ENCODE measurements at regions of chr10 and their contacts with region 1.

Region 1: GRCh38 chr10:99430451-99431189 is at the start of gene GOT1:
- DNase-seq: peak; percentile 93
- H3K4me3 Mint-ChIP-seq: peak within 1 kb of the TSS; percentile 99
- H3K27ac Mint-ChIP-seq: peak within 1 kb of the TSS; percentile 94
- H3K4me1 Mint-ChIP-seq: peaks cover 26% of the 10 kb centered on the region
- H3K27me3 Mint-ChIP-seq: peaks cover 3% of the 10 kb centered on the region
- total RNA-seq, gene GOT1: 35.9 and 36.1 TPM in 2 replicates

Region 2: GRCh38 chr10:98446661-98447221 is 983.9 kb before region 1 on chr10 and contains the start of gene HPS1:
- intact Hi-C with region 1: loop called (anchors 5 kb)
- DNase-seq: peak; percentile 78
- H3K4me3 Mint-ChIP-seq: peak within 1 kb of the TSS; percentile 92
- H3K27ac Mint-ChIP-seq: peak within 1 kb of the TSS; percentile 80
- H3K4me1 Mint-ChIP-seq: peaks cover 30% of the 10 kb centered on the region
- H3K27me3 Mint-ChIP-seq: peaks cover 18% of the 10 kb centered on the region
- total RNA-seq, gene HPS1: 56.1 and 63.1 TPM in 2 replicates

Region 3: DNA sequence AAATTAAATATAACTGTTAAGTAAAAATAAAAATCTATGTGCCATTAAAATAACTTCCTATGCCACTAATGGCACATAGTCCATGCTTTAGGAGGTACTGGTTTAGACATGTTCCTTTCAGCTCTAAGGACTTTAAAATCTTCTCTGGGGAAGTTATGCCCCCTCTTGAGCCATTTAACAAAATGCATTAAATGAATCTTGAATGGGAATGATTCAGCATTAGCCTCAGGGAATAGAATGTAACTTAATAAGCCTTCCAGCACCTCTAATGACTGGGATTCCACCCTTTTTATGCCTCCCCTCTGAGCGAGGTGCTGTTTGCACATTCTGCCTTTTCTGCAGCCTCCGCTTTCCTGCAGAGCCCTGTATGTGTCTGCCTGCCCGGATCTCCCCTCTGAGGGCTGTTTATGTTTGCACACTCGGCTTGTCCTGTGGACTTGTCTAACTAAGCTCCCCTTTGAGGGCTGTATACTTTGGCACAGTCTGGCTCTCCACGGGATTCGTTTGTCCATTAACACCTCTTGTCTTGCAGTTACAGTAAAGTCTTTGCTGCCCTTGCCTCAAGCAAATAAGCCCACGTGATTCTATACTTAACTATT is 875.5 kb before region 1 on chr10:
- intact Hi-C with region 1: no loop called
- DNase-seq: no peak
- H3K4me3 Mint-ChIP-seq: no peak overlapping the region
- H3K27ac Mint-ChIP-seq: no peak overlapping the region
- H3K4me1 Mint-ChIP-seq: no peaks in the 10 kb centered on the region
- H3K27me3 Mint-ChIP-seq: no peaks in the 10 kb centered on the region

Region 4: GRCh38 chr10:99395750-99396445 is 34.7 kb before region 1 on chr10:
- intact Hi-C with region 1: loop called (anchors 1 kb)
- DNase-seq: no peak
- H3K4me3 Mint-ChIP-seq: no peak overlapping the region
- H3K27ac Mint-ChIP-seq: peak overlapping the region; percentile 6
- H3K4me1 Mint-ChIP-seq: peaks cover 7% of the 10 kb centered on the region
- H3K27me3 Mint-ChIP-seq: peaks cover 4% of the 10 kb centered on the region

Region 5: DNA sequence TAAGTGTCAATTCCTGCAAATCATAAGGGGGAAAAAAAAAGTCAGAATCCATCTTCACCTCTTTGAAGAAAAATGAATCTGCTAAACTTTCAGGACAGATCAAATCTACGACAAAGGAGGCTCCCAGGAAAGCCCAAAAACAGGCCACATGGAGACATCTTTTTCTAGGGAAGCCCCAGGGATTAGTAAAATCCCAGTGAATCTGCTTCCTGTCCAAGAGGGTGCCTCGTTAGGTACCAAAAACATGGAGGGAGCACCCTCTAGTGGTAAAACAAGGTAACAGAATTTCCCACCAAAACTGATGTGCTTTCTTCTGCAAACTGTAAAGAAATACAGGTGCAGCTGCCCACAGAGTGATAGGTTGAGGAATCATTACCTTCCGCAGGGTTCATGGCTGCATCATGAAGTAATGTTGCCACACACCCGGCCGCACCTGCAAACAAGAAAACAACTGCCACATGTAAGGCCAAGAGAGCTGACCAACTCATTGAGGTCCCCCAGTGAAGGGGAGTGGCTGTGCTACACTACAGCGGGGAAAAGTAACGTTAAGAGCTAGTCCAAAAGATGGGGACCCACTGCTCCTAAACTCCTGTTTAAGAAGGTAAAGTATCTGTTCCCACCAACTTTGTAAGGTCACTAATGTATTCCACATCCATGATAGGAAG is 181.7 kb after region 1 on chr10:
- intact Hi-C with region 1: loop called (anchors 1 kb)
- DNase-seq: no peak
- H3K4me3 Mint-ChIP-seq: no peak overlapping the region
- H3K27ac Mint-ChIP-seq: peak overlapping the region; percentile 41
- H3K4me1 Mint-ChIP-seq: peaks cover 33% of the 10 kb centered on the region
- H3K27me3 Mint-ChIP-seq: no peaks in the 10 kb centered on the region

Region 6: GRCh38 chr10:99659031-99659867 is 228.6 kb after region 1 on chr10 and contains the start of gene ENTPD7:
- intact Hi-C with region 1: loop called (anchors 1 kb)
- DNase-seq: peak; percentile 90
- H3K4me3 Mint-ChIP-seq: peak within 1 kb of the TSS; percentile 96
- H3K27ac Mint-ChIP-seq: peak within 1 kb of the TSS; percentile 91
- H3K4me1 Mint-ChIP-seq: peaks cover 17% of the 10 kb centered on the region
- H3K27me3 Mint-ChIP-seq: peaks cover 19% of the 10 kb centered on the region
- total RNA-seq, gene ENTPD7: 11.0 and 11.1 TPM in 2 replicates

Region 7: DNA sequence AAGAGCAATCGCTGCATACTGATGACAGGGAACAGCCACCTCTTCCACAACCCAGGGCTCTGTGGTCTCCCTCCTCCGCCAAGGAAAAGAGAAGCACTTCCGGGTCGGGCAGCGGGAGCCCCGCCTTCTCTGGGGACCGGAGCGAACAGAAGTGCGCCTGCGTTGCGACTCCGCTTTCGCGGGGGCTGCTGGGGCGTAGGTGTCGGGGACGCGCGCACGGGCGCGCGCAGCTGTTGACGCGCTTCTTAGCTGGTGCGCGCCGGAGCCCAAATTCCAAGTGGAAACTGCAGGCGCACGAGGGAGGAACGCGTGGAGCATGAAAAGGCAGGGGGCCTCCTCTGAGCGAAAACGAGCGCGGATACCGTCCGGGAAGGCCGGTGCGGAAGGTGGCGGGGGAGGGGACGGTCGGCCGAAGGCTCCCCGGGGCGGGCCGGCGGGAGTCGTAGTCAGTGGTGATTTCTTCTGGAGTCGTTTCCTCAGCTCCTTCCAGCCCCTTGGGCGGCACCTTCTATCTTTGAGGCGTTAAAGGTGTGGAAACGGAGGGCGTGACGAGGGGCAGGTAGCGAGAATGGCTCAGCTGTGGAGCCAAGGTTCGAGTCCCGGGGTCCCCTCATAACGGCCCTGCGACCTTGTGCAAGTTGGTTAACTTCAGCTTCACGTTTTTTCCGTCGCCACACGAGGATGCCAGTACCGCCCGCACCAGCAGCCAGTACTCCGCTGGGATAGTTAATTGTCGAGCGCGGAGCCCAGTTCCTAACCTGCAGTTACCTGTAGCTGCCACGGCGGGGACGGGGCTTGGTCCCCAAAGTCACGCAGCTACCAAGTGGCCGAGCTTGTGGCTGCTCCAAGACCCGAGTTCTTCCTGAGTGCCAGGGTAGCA is 301.7 kb after region 1 on chr10 and contains the starts of genes COX15 and CUTC:
- intact Hi-C with region 1: loop called (anchors 1 kb)
- DNase-seq: peak; percentile 94
- H3K4me3 Mint-ChIP-seq: peak within 1 kb of the TSS; percentile 98
- H3K27ac Mint-ChIP-seq: peak within 1 kb of the TSS; percentile 99
- H3K4me1 Mint-ChIP-seq: peaks cover 41% of the 10 kb centered on the region
- H3K27me3 Mint-ChIP-seq: no peaks in the 10 kb centered on the region
- total RNA-seq, gene COX15: 36.7 and 38.1 TPM in 2 replicates
- total RNA-seq, gene CUTC: 42.2 and 45.4 TPM in 2 replicates

Measured in activated T-helper 1 cell treated with anti-CD3 and anti-CD28 coated beads, Interleukin-12 subunit alpha, Interleukin-12 subunit beta, Interleukin-2, Interleukin-4 antibody, amounts not matched to agents 30 ng/mL and 10 ng/mL and 1 ng/mL, durations not matched to agents 14 hours and 24 hours and 36 hours (primary cell).